ENCODE measurements at regions of chr9 and their contacts with region 1.

Region 1: GRCh38 chr9:105414947-105415661 is 32.7 kb upstream of the FSD1L start:
- DNase-seq: no peak
- H3K4me3 ChIP-seq: no peak overlapping the region
- CTCF ChIP-seq: peak; percentile 64

Region 2: DNA sequence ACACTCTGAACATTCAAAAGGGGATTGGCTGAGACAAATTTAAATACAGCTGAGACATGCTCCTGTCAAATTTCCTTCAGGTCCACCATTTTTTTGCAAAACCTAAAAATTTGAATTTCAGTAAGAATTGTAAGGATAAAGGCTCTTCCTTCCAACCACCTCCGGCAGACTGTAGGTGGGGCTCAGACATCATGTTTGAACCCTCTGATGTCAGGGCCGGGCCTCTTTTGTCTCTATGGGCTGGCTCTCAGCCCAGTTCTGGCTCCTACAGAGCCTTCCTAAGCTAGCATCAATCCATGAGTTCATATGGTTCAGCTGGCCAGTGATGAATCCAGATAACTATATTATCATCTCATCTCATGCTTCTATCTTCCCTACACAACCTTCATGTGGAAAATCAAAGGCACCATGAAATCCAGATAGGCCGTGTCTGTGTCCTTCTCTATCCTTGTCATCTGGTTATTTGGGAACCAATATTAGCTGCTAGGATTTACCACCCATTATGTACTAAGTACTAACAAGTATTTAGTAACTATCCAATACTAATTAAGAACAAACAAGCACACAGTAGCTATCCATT is 607.0 kb before region 1 on chr9:
- CTCF ChIA-PET with region 1: interaction called, 20 read pairs
- POLR2A ChIA-PET with region 1: no interaction called
- DNase-seq: no peak
- H3K4me3 ChIP-seq: no peak overlapping the region
- CTCF ChIP-seq: peak; percentile 20

Region 3: DNA sequence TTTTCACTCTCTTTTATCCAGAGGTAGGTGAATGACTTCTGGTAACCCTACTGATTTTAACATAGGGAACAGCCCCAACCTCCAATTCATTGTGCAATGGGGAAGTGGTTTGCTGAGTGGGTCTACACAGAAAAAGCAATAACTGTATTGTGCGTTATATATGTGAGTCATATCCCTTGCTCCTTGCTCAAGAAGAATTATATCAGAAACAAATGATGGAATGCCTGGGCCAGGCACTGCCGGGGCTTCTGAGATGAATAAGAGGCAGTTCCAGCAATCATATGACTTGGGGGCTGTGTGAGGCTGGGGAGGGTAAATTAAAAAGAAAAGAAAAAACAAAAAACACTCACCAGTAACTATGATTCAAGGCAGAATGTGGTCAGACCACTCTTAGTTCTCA is 408.0 kb before region 1 on chr9:
- CTCF ChIA-PET with region 1: no interaction called
- POLR2A ChIA-PET with region 1: no interaction called
- DNase-seq: no peak
- H3K4me3 ChIP-seq: no peak overlapping the region
- CTCF ChIP-seq: no peak

Region 4: GRCh38 chr9:105157130-105157583 is 257.9 kb before region 1 on chr9:
- CTCF ChIA-PET with region 1: interaction called, 235 read pairs
- POLR2A ChIA-PET with region 1: no interaction called
- DNase-seq: peak; percentile 41
- H3K4me3 ChIP-seq: no peak overlapping the region
- CTCF ChIP-seq: peak; percentile 37

Region 5: GRCh38 chr9:105399117-105399516 is 16.0 kb before region 1 on chr9:
- CTCF ChIA-PET with region 1: interaction called, 22 read pairs
- POLR2A ChIA-PET with region 1: no interaction called
- DNase-seq: no peak
- H3K4me3 ChIP-seq: no peak overlapping the region
- CTCF ChIP-seq: no peak

Measured in AG04449 (cell line).